ENCODE measurements at regions of chr2 and their contacts with region 1.

Region 1: GRCh38 chr2:135004005-135004746 is 43.1 kb downstream of the MAP3K19 start:
- DNase-seq: peak; percentile 4
- H3K4me3 ChIP-seq: no peak overlapping the region
- CTCF ChIP-seq: peak; percentile 95

Region 2: DNA sequence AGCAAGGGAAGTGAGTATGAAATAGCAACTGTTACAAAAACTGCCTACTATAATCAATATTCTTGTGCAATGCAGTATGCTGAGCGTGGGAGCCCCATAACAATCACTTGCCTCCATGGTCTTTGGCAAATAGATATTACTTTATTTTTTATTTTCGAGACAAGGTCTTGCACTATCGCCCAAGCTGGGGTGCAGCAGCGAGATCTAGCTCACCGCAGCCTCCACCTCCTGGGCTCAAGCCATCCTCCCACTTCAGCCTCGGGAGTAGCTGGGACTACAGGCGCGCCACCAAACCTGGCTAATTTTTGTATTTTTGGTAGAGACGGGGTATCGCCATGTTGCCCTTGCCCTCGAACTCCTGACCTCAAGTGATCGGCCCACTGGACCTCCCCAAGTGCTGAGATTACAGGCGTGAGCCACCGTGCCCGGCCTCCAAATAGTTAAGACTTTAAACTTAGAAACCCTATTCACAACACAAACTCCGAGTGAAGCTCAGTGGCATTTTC is 86.8 kb before region 1 on chr2:
- CTCF ChIA-PET with region 1: no interaction called
- POLR2A ChIA-PET with region 1: no interaction called
- DNase-seq: no peak
- H3K4me3 ChIP-seq: peak overlapping the region; percentile 94
- CTCF ChIP-seq: no peak

Region 3: GRCh38 chr2:135023886-135024485 is 19.8 kb after region 1 on chr2:
- CTCF ChIA-PET with region 1: interaction called, 15 read pairs
- POLR2A ChIA-PET with region 1: no interaction called
- DNase-seq: no peak
- H3K4me3 ChIP-seq: no peak overlapping the region
- CTCF ChIP-seq: no peak

Region 4: DNA sequence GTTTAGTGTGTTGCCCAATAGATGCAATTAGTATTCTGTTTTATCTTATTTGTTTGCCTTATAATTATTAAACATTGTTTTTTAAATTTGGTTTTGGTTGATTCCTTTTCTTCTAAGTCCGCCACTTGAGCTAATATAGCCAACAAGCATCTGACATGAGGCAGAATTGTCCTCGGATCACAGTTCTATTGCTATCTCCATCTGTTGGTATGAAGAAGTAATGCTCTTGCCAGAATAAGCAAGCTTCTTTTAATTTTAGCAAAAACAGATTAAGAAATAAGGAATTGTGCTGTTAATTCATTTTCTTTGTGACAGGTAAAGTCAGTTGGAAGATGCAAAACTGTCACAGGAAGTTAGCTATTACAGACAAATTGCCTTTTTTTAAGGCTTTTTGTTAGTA is 581.4 kb after region 1 on chr2:
- CTCF ChIA-PET with region 1: interaction called, 11 read pairs
- POLR2A ChIA-PET with region 1: no interaction called
- DNase-seq: no peak
- H3K4me3 ChIP-seq: no peak overlapping the region
- CTCF ChIP-seq: no peak

Region 5: DNA sequence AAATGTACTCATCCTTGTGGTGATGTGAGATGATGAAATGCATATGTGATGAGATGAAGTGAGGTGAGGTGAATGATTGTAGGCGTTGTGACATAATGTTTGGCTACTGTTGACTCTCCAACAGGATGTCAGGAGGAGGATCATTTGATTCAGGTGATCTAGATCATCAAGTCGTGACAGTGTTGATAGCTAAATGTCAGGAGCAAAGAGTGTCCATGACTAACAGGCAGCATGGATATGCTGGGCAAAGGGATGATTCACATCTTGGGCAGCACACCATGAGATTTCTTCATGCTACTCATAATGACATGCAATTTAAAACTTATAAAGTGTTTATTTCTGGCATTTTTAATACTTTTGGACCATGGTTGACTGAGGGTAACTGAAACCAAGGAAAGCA is 697.3 kb after region 1 on chr2:
- CTCF ChIA-PET with region 1: interaction called, 16 read pairs
- POLR2A ChIA-PET with region 1: no interaction called
- DNase-seq: peak; percentile 12
- H3K4me3 ChIP-seq: no peak overlapping the region
- CTCF ChIP-seq: no peak